ENCODE measurements at regions of chr15 and their contacts with region 1.

Region 1: GRCh38 chr15:38072348-38073177 is 138.1 kb downstream of the TMCO5A start:
- DNase-seq: peak; percentile 69
- H3K4me3 ChIP-seq: peak overlapping the region; percentile 36 to 42
- H3K27ac ChIP-seq: peak overlapping the region; percentile 80 to 88
- H3K4me1 ChIP-seq: no peaks in the 10 kb centered on the region
- H3K27me3 ChIP-seq: no peaks in the 10 kb centered on the region
- CTCF ChIP-seq: peak in 1 of 4 experiments; percentile 5
- POLR2A ChIP-seq: no peak

Region 2: DNA sequence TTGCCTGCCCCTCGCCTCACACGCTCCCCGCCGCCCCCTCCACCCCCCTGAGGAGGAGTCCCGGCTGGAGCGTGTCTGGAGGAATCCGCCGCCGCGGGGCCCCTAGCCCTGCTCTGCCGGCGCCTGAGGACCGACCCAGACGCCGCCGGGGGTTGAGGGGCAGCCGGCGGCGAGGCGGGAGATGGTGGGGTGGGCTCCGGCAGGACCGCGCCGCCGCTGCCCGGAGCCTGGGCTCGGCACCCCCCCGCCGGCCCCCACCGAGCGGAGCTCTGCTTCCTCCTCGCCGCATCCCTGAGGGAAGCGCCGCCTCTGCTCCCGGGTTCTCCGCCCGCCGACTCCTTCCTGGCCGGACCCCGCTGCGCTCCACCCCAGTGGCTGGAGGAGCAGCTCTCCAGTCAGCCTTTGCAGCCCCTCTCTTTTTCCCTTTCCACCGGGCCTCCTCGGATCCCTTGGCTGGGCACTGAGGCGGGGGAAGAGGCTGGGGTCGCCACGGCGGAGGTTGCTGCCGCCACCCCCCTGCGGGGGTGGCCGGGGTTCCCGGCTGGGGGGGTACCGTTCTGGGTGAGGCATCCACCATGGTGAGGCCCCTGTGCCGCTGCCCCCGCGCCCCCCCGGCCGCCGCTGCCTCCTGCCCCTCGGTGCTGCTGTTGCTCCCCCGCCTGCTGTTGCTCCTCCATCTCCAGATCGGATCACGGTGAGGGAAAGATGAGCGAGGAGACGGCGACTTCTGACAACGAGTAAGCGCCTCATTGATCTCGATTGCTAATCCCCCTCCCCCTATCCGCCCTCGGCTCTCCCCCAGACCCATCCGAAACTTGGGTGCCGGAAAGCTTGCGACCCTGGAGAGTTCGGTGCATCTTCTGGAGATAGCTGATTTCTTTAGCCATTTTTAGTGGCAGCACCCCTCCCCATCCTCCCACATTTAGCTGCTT is 180.2 kb after region 1 on chr15 and contains the start of gene SPRED1:
- intact Hi-C with region 1: loop called (anchors 5 kb)
- DNase-seq: peak; percentile 67
- H3K4me3 ChIP-seq: peak within 1 kb of the TSS; percentile 86 to 94
- H3K27ac ChIP-seq: peak within 1 kb of the TSS; percentile 93 to 97
- H3K4me1 ChIP-seq: no peaks in the 10 kb centered on the region
- H3K27me3 ChIP-seq: no peaks in the 10 kb centered on the region
- CTCF ChIP-seq: no peak
- POLR2A ChIP-seq: no peak
- total RNA-seq, gene SPRED1: 9.5 to 13.3 TPM